ENCODE measurements at regions of chr15 and their contacts with region 1.

Region 1: GRCh38 chr15:60326824-60327654 is 70.7 kb downstream of the ANXA2 start:
- DNase-seq: peak; percentile 76
- H3K4me3 Mint-ChIP-seq: no peak overlapping the region
- H3K27ac Mint-ChIP-seq: no peak overlapping the region
- H3K4me1 Mint-ChIP-seq: no peaks in the 10 kb centered on the region
- H3K27me3 Mint-ChIP-seq: no peaks in the 10 kb centered on the region
- CTCF ChIP-seq: peak; percentile 94

Region 2: GRCh38 chr15:59437817-59438562 is 889.0 kb before region 1 on chr15 and contains the start of gene FAM81A:
- CTCF ChIA-PET with region 1: no interaction called
- POLR2A ChIA-PET with region 1: no interaction called
- intact Hi-C with region 1: no loop called
- DNase-seq: peak; percentile 71
- H3K4me3 Mint-ChIP-seq: peak within 1 kb of the TSS; percentile 73
- H3K27ac Mint-ChIP-seq: no peak within 1 kb of the TSS
- H3K4me1 Mint-ChIP-seq: no peaks in the 10 kb centered on the region
- H3K27me3 Mint-ChIP-seq: no peaks in the 10 kb centered on the region
- CTCF ChIP-seq: no peak
- total RNA-seq, gene FAM81A: 1.1 TPM in 2 replicates

Region 3: GRCh38 chr15:59725172-59725486 is 601.9 kb before region 1 on chr15:
- CTCF ChIA-PET with region 1: interaction called, 53 read pairs
- POLR2A ChIA-PET with region 1: interaction called, 8 read pairs
- intact Hi-C with region 1: loop called (anchors 1 kb)
- DNase-seq: no peak
- H3K4me3 Mint-ChIP-seq: no peak overlapping the region
- H3K27ac Mint-ChIP-seq: no peak overlapping the region
- H3K4me1 Mint-ChIP-seq: no peaks in the 10 kb centered on the region
- H3K27me3 Mint-ChIP-seq: peaks cover 13% of the 10 kb centered on the region
- CTCF ChIP-seq: no peak

Region 4: DNA sequence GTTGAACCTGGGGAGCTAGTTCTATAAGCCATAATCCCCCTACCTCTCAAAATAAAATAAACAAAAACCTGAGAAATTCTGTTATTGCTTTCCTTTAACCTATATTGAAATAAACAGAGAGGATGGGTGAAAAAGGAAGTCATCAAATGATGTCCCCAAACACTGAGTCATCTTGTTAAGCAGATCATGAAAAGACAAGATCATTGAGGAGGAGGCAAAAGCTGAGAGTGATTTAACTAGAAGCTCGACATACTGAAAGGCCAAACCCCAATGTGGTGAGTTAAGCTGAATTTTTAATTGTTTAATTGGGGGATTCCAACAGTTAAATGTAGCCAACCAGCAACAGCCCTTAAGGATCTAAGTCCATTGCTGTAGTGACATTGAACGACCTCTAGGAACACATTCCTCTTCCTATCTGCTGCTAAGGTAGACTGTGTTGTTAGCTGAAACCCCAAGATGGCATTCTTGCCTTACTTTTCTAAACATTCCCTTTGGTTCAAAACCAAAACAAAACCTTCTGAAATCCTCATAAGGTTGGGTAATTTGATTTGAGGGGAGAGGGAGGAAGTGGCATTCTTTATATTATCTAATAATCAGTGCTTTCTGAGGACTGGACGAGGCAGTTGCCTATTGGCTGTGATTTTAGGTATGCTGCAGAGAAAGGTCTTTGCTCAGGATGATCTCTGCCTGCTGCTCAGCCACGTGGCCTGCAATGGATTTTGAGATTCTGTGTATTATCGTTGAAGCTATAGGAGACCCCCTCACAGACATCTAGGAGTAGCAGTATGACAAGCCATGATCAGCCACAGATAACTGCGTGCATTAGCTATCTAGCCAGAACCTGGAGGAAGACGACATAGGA is 575.3 kb before region 1 on chr15:
- CTCF ChIA-PET with region 1: interaction called, 102 read pairs
- POLR2A ChIA-PET with region 1: interaction called, 3 read pairs
- intact Hi-C with region 1: loop called (anchors 1 kb)
- DNase-seq: peak; percentile 54
- H3K4me3 Mint-ChIP-seq: no peak overlapping the region
- H3K27ac Mint-ChIP-seq: no peak overlapping the region
- H3K4me1 Mint-ChIP-seq: no peaks in the 10 kb centered on the region
- H3K27me3 Mint-ChIP-seq: peaks cover 13% of the 10 kb centered on the region
- CTCF ChIP-seq: peak; percentile 73

Region 5: DNA sequence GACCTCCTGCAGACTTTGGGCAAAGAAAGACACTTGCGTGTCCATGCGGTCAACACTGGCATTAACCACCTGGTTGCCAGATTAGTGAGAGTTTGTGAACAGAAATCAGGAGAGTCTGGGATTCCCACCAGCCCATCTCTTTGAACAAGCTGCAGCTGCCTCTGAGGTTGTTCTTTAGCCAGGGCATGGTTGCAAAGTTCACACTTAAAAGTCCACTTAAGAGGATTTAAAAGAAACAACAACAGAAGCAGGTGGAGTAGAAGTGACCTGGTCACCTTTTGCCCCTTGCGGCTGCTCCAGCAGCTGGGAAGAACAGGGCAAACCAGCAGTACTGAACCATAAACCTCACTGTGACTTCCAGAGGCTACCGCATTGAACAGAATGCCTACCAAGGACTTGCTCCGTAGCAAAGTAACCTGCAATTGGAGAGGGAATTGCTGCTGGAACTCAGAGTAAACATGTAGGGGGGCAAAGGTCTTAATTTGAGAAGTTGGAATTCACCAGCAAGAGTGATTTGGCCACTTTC is 225.6 kb before region 1 on chr15:
- CTCF ChIA-PET with region 1: no interaction called
- POLR2A ChIA-PET with region 1: no interaction called
- intact Hi-C with region 1: no loop called
- DNase-seq: no peak
- H3K4me3 Mint-ChIP-seq: no peak overlapping the region
- H3K27ac Mint-ChIP-seq: no peak overlapping the region
- H3K4me1 Mint-ChIP-seq: peaks cover 4% of the 10 kb centered on the region
- H3K27me3 Mint-ChIP-seq: no peaks in the 10 kb centered on the region
- CTCF ChIP-seq: no peak

Region 6: DNA sequence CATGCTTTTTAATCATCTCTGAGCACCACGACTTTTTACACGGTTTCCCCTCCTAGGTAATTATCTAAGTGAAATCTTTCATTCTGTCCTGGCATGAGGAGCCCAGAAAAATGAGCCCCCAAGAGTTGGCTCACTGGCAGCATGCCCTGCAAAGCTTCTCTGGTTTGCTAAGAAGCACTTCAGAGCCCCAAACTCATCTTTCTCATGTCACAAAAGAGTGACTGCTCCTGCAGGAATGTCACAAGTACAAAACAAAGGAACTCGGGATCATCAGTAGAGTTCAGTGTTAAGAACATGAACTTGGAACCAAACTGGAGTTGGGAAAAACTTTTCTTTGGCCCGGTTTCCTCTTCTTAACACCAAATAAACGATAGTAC is 199.1 kb before region 1 on chr15:
- CTCF ChIA-PET with region 1: interaction called, 9 read pairs
- POLR2A ChIA-PET with region 1: interaction called, 3 read pairs
- intact Hi-C with region 1: loop called (anchors 2 kb)
- DNase-seq: no peak
- H3K4me3 Mint-ChIP-seq: peak overlapping the region; percentile 85
- H3K27ac Mint-ChIP-seq: peak overlapping the region; percentile 94
- H3K4me1 Mint-ChIP-seq: peaks cover 18% of the 10 kb centered on the region
- H3K27me3 Mint-ChIP-seq: no peaks in the 10 kb centered on the region
- CTCF ChIP-seq: no peak

Region 7: DNA sequence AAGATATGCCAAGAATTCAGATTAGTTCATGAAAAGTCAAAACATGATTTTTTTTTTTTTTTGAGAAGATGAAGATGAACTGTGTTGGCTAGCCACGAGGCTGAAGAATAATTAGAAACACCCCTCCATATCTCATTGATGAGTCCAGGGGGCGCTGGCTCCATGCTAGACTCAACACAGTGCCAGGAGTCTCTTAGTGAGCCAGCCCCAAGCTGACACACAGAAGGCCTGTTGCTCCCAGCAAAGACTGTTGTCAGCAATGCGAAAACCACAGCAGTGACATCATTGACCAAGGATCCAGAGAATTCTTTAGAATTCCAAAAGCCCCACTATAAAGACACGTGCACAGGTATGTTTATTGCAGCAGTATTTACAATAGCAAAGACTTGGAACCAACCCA is 114.5 kb before region 1 on chr15:
- CTCF ChIA-PET with region 1: interaction called, 12 read pairs
- POLR2A ChIA-PET with region 1: no interaction called
- intact Hi-C with region 1: no loop called
- DNase-seq: peak; percentile 25
- H3K4me3 Mint-ChIP-seq: no peak overlapping the region
- H3K27ac Mint-ChIP-seq: no peak overlapping the region
- H3K4me1 Mint-ChIP-seq: peaks cover 13% of the 10 kb centered on the region
- H3K27me3 Mint-ChIP-seq: no peaks in the 10 kb centered on the region
- CTCF ChIP-seq: no peak

Region 8: DNA sequence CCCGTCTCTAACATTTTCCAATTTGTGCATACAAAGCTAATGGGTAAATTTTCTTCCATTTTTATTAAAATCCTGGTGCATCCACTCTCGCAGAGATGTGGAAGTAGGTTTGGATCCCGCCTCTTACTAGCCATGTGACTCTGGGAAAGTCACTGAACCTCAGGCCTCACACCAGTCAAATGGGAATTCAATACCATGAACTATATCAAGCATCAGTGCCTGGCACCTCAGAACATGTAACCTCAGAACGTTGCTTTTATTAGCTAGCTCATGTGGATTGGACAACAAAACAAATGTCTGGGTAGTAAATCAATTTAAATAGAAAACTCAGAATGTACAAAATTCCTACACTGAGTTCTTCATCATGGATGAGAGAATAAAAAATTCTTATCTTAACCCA is 10.0 kb after region 1 on chr15:
- CTCF ChIA-PET with region 1: interaction called, 10 read pairs
- POLR2A ChIA-PET with region 1: interaction called, 4 read pairs
- intact Hi-C with region 1: no loop called
- DNase-seq: no peak
- H3K4me3 Mint-ChIP-seq: no peak overlapping the region
- H3K27ac Mint-ChIP-seq: no peak overlapping the region
- H3K4me1 Mint-ChIP-seq: peaks cover 17% of the 10 kb centered on the region
- H3K27me3 Mint-ChIP-seq: no peaks in the 10 kb centered on the region
- CTCF ChIP-seq: no peak

Region 9: DNA sequence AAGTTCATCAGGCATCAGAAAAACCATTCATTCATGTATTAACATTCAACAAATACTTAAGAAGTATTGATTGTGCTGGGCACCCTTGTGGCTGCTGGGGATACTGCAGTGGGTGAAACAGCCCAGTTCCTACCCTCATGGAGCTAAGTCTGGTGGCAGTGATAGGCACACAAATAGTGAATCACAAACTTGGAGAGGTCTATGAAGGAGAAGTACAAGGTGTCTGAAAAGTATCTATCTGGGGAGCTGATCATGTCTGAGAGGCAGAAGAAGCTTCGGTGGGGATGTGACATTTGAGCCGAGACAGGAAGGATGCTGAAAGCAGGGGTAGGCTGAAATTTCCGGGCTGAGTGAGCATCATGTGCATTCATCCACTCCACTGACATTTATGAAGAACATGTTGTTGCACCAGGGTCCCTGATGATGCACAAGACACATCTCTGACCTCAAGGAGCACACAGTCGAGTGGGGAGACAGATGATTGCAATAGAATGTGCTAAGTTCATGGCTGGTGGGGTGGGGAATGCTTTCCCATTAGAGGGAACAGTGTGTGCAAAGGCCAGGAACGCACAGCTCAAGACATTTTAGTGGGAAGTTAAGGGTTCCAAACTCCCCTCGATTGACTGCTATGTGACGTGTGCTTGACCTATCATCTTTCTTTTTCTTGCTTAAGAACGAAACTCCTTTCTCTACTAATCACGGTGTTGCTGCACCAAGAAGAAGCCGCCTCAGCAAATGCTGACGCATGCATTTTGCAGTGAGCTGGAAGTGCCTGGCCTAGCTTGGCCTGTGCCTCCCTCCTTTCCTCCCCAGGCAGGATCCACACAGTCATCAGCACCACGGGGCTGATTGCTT is 461.0 kb after region 1 on chr15:
- CTCF ChIA-PET with region 1: no interaction called
- POLR2A ChIA-PET with region 1: no interaction called
- intact Hi-C with region 1: no loop called
- DNase-seq: peak; percentile 18
- H3K4me3 Mint-ChIP-seq: no peak overlapping the region
- H3K27ac Mint-ChIP-seq: no peak overlapping the region
- H3K4me1 Mint-ChIP-seq: no peaks in the 10 kb centered on the region
- H3K27me3 Mint-ChIP-seq: no peaks in the 10 kb centered on the region
- CTCF ChIP-seq: peak; percentile 34

Region 10: GRCh38 chr15:60932051-60932915 is 605.2 kb after region 1 on chr15:
- CTCF ChIA-PET with region 1: interaction called, 3 read pairs
- POLR2A ChIA-PET with region 1: no interaction called
- intact Hi-C with region 1: loop called (anchors 2 kb)
- DNase-seq: peak; percentile 98
- H3K4me3 Mint-ChIP-seq: no peak overlapping the region
- H3K27ac Mint-ChIP-seq: no peak overlapping the region
- H3K4me1 Mint-ChIP-seq: peaks cover 29% of the 10 kb centered on the region
- H3K27me3 Mint-ChIP-seq: peaks cover 40% of the 10 kb centered on the region
- CTCF ChIP-seq: peak; percentile 67